ENCODE measurements at regions of chr1 and their contacts with region 1.

Region 1: DNA sequence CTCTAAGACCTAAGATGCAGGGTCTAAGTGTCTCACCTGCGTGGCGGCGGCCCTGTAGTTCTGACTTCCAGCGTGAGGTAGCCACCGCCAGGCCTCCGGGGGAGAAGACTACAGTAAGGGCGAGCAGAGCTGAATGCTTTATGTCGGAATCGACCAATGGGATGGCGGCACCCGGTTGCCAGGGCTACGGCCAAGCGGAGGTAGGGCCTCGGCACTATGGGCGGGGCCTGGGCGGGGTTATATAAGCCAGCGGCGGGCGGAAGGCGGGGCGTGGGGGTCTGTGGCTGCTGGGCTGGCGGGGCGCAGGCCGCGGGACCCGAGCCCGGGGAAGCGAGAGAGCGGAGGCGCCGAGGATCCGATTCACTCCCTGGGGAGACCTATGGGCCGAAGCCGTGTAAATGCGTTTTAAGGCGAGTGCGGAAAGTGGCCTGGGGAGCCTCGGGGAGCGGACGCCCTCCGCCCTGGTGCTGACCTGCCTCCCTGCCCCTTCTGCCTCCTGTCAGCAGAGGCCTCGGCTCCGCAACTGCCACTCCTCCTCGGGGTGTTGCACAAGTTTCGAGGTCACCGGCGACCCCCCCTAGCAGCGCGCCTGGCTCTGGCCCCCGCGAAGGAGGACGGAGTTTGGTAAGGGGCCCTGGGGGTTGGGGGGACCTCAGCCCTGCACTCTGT is at the start of gene AZIN2:
- DNase-seq: peak; percentile 98
- H3K4me3 Mint-ChIP-seq: peak within 1 kb of the TSS; percentile 62
- H3K27ac Mint-ChIP-seq: no peak within 1 kb of the TSS
- H3K4me1 Mint-ChIP-seq: peaks cover 6% of the 10 kb centered on the region
- H3K27me3 Mint-ChIP-seq: no peaks in the 10 kb centered on the region
- total RNA-seq, gene AZIN2: 2.5 to 2.9 TPM

Region 2: GRCh38 chr1:32939655-32940371 is 141.2 kb before region 1 on chr1:
- CTCF ChIA-PET with region 1: interaction called, 52 read pairs
- POLR2A ChIA-PET with region 1: interaction called, 6 read pairs
- intact Hi-C with region 1: loop called (anchors 10 kb)
- DNase-seq: peak; percentile 65
- H3K4me3 Mint-ChIP-seq: no peak overlapping the region
- H3K27ac Mint-ChIP-seq: peak overlapping the region; percentile 72
- H3K4me1 Mint-ChIP-seq: peaks cover 43% of the 10 kb centered on the region
- H3K27me3 Mint-ChIP-seq: no peaks in the 10 kb centered on the region

Region 3: DNA sequence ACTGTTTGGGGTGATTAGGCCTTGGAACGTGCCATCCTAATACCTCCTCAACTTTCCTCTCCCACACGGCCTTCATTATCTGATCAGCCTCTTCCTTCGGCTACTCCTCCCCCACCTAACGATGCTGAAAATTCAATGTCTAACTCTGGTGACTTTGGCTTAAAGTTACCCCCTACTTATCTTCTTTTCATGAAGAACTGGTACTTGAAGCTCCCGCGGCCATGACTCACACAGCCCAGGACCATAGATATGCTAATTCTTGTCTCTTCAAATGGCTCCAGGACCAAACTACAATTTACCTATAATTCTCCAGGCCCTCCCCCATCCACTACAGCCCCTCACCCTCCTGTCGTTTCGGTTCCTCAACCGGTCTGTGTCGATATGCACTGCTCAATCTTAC is 15.7 kb before region 1 on chr1:
- CTCF ChIA-PET with region 1: no interaction called
- POLR2A ChIA-PET with region 1: no interaction called
- intact Hi-C with region 1: no loop called
- DNase-seq: no peak
- H3K4me3 Mint-ChIP-seq: no peak overlapping the region
- H3K27ac Mint-ChIP-seq: no peak overlapping the region
- H3K4me1 Mint-ChIP-seq: no peaks in the 10 kb centered on the region
- H3K27me3 Mint-ChIP-seq: peaks cover 6% of the 10 kb centered on the region

Region 4: GRCh38 chr1:33327587-33328315 is 246.7 kb after region 1 on chr1:
- CTCF ChIA-PET with region 1: no interaction called
- POLR2A ChIA-PET with region 1: no interaction called
- intact Hi-C with region 1: no loop called
- DNase-seq: no peak
- H3K4me3 Mint-ChIP-seq: no peak overlapping the region
- H3K27ac Mint-ChIP-seq: no peak overlapping the region
- H3K4me1 Mint-ChIP-seq: no peaks in the 10 kb centered on the region
- H3K27me3 Mint-ChIP-seq: no peaks in the 10 kb centered on the region

Region 5: DNA sequence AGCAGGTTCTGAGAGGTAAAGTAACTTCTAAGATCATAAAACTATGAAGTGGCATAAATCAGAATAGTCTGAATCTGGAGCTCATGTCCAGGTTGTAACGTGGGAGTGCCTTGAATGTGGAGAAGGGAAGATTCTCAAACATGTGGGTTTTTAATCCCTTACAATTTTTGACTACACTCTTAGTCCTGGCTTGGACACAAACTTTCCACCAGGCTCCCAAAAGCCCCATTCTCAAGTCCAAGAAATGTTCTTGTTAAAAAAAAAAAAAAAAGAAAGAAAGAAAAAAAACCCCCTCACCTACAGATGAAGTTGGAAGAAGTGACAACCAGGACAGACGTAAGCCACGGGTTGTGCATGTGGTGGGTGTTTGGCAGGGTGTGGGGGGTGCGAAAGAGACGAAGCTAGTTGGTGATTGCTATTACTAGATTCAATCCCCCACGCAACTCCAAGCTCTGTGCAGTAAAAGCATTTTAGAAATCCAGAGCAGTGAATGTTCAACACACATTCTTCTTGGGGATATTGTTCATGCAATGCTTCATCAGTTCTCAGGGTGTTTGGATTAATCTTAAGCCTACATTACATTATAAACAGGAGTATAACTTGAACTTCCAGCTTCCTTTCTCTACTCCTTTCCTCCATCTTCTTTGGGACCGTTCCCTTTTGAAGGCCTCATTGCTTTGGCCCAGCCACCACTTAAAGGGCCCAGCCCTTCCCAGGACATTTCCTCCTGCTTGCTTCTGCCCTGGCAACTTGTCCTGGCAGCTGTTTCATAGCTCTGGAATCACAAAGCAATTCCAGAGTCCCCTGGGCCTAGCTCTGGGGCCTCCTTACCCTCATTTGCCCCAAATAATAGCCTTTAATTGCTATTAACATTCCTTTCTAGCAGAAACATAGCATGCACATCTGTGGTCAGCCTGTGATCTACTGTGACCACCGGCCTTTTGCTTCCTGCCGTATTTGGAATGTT is 308.1 kb after region 1 on chr1:
- CTCF ChIA-PET with region 1: no interaction called
- POLR2A ChIA-PET with region 1: no interaction called
- intact Hi-C with region 1: no loop called
- DNase-seq: no peak
- H3K4me3 Mint-ChIP-seq: no peak overlapping the region
- H3K27ac Mint-ChIP-seq: no peak overlapping the region
- H3K4me1 Mint-ChIP-seq: no peaks in the 10 kb centered on the region
- H3K27me3 Mint-ChIP-seq: peaks cover 5% of the 10 kb centered on the region